Activated CD8-positive, alpha-beta T cell treated with anti-CD3 and anti-CD28 coated beads for 36 hours (primary cell): ENCODE measurements at regions of chr2 and their contacts with region 1.

Region 1: GRCh38 chr2:74147727-74148456 is at the start of gene BOLA3:
- DNase-seq: peak; percentile 90
- ATAC-seq: peak; percentile 96
- H3K4me3 Mint-ChIP-seq: no peak within 1 kb of the TSS
- H3K27ac Mint-ChIP-seq: no peak within 1 kb of the TSS
- H3K4me1 Mint-ChIP-seq: peaks cover 4% of the 10 kb centered on the region
- H3K27me3 Mint-ChIP-seq: no peaks in the 10 kb centered on the region
- CTCF ChIP-seq: peak; percentile 71
- total RNA-seq, gene BOLA3: 131 to 135 TPM

Region 2: DNA sequence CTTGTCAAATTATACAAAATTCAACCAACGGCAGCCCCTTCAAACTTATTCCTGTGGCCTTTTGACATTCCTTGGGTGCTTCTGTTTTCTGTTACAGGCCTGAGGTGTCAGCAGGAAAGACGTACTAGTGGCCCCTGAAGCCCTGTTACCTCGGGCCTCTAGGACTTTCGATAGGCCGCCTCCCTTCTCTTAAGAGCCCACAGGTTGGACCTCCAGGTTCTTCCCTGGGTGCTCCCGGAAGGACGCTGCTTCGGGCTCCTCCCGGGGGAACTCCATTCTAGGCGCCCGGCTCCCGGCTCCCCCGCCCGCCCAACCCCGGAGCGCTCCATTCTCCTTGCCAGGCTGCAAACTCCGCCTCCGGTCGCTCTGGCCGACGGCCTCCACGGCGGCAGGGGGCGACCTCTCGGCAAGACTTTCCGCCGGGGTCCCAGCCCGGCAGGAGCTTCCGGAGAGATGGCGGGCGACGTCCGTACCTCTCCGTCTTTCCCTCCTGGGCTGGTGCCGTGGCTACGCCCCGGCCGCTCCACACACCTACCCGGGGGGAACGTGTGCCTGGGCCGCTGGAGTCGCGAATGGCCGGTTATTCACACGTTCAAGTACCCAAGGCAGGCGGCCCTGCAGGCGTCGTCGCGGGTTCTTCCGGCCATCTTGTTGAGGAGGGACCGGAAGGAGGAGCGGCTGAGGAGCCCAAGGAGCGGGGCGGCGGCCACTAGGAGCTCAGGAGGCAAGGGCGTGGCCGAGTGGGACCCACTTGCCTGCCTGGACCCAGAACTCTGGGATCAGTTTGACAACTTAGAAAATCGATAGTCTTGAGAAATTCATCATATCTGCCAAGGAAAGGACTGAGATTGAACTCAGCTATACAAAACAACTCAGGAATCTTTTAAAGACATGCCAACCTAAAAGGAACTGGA is 27.7 kb before region 1 on chr2:
- CTCF ChIA-PET with region 1: interaction called, 18 read pairs
- POLR2A ChIA-PET with region 1: interaction called, 10 read pairs
- intact Hi-C with region 1: no loop called
- DNase-seq: peak; percentile 88
- ATAC-seq: peak; percentile 98
- H3K4me3 Mint-ChIP-seq: peak overlapping the region; percentile 83
- H3K27ac Mint-ChIP-seq: peak overlapping the region; percentile 94
- H3K4me1 Mint-ChIP-seq: peaks cover 10% of the 10 kb centered on the region
- H3K27me3 Mint-ChIP-seq: peaks cover 3% of the 10 kb centered on the region
- CTCF ChIP-seq: peak; percentile 73

Region 3: DNA sequence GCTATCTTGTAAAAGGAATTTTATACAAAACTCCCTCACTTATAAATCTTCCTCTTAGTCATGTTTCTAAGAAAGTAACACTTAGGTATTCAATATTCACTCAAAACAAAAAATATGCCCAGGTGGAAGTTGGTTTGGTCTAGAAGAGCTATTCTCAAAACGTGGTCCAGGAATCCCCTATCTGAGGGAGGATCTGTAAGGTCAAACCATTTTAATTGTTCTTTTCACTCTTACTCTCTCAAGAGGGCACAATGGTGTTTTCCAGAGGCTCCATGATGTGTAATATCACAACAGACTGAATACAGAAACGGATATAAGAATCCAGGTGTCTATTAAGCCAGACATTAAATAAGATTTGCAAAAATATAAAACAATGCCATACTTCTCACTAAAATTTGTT is 20.8 kb after region 1 on chr2:
- CTCF ChIA-PET with region 1: interaction called, 8 read pairs
- POLR2A ChIA-PET with region 1: interaction called, 13 read pairs
- intact Hi-C with region 1: no loop called
- DNase-seq: no peak
- ATAC-seq: peak; percentile 89
- H3K4me3 Mint-ChIP-seq: no peak overlapping the region
- H3K27ac Mint-ChIP-seq: peak overlapping the region; percentile 80
- H3K4me1 Mint-ChIP-seq: peaks cover 28% of the 10 kb centered on the region
- H3K27me3 Mint-ChIP-seq: no peaks in the 10 kb centered on the region
- CTCF ChIP-seq: no peak

Region 4: GRCh38 chr2:74198461-74199274 is 50.8 kb after region 1 on chr2 and contains the start of gene MTHFD2:
- CTCF ChIA-PET with region 1: interaction called, 5 read pairs
- POLR2A ChIA-PET with region 1: interaction called, 31 read pairs
- intact Hi-C with region 1: no loop called
- DNase-seq: peak; percentile 97
- ATAC-seq: peak; percentile 90
- H3K4me3 Mint-ChIP-seq: peak within 1 kb of the TSS; percentile 87
- H3K27ac Mint-ChIP-seq: peak within 1 kb of the TSS; percentile 98
- H3K4me1 Mint-ChIP-seq: peaks cover 36% of the 10 kb centered on the region
- H3K27me3 Mint-ChIP-seq: peaks cover 2% of the 10 kb centered on the region
- CTCF ChIP-seq: peak; percentile 82
- total RNA-seq, gene MTHFD2: 348 to 361 TPM